ENCODE measurements at regions of chr2 and their contacts with region 1.

Region 1: GRCh38 chr2:159712143-159712928 is at the start of gene MARCHF7:
- DNase-seq: peak; percentile 98
- ATAC-seq: peak; percentile 91
- H3K4me3 ChIP-seq: peak within 1 kb of the TSS; percentile 59 to 100 (median 80)
- H3K4me3 Mint-ChIP-seq: peak within 1 kb of the TSS; percentile 99
- H3K27ac ChIP-seq: peak within 1 kb of the TSS; percentile 96 to 99
- H3K27ac Mint-ChIP-seq: peak within 1 kb of the TSS; percentile 99
- H3K4me1 ChIP-seq: peaks cover 29 to 34% of the 10 kb centered on the region in 2 donors
- H3K4me1 Mint-ChIP-seq: peaks cover 52% of the 10 kb centered on the region
- H3K27me3 ChIP-seq: no peaks in the 10 kb centered on the region
- H3K27me3 Mint-ChIP-seq: no peaks in the 10 kb centered on the region
- CTCF ChIP-seq: peak; percentile 63
- total RNA-seq, gene MARCHF7: 109 and 116 TPM in 2 replicates

Region 2: GRCh38 chr2:159286709-159287441 is 425.5 kb before region 1 on chr2:
- CTCF ChIA-PET with region 1: interaction called, 3 read pairs
- POLR2A ChIA-PET with region 1: interaction called, 5 read pairs
- intact Hi-C with region 1: loop called (anchors 1 kb)
- DNase-seq: peak; percentile 98
- ATAC-seq: peak; percentile 99
- H3K4me3 ChIP-seq: peak overlapping the region; percentile 65 to 93 (median 85)
- H3K4me3 Mint-ChIP-seq: peak overlapping the region; percentile 95
- H3K27ac ChIP-seq: peak overlapping the region; percentile 78 to 87
- H3K27ac Mint-ChIP-seq: peak overlapping the region; percentile 90
- H3K4me1 ChIP-seq: peaks cover 20 to 26% of the 10 kb centered on the region in 2 donors
- H3K4me1 Mint-ChIP-seq: peaks cover 32% of the 10 kb centered on the region
- H3K27me3 ChIP-seq: no peaks in the 10 kb centered on the region
- H3K27me3 Mint-ChIP-seq: peaks cover 4% of the 10 kb centered on the region
- CTCF ChIP-seq: no peak

Region 3: DNA sequence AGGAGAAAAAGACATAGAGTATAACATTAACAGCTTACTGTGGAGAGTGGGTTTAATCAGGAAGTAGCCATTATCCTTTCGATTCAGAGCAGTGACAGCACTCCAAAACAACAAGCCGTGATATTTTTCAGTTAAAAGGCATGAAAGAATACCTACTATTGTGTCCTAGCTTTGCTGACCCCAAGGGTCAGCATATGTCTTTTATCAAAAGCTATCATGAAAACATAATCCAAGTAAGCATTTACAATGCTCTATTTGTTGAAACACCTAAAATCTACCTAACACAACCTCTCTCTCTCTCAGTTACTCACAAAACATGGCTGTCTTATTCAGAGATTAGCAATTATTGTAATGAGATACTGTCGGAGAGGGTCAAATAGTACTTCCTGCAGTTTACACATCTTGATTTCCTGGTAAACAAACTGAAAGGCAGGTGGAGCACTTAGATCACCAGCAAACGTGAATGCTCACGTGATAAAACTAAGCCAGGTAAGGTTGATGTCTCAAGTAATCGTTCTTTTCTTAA is 196.0 kb before region 1 on chr2:
- CTCF ChIA-PET with region 1: interaction called, 6 read pairs
- POLR2A ChIA-PET with region 1: no interaction called
- intact Hi-C with region 1: loop called (anchors 1 kb)
- DNase-seq: peak; percentile 80
- ATAC-seq: peak; percentile 86
- H3K4me3 ChIP-seq: peak overlapping the region; percentile 35 to 91 (median 67)
- H3K4me3 Mint-ChIP-seq: peak overlapping the region; percentile 78
- H3K27ac ChIP-seq: peak overlapping the region; percentile 49 to 79
- H3K27ac Mint-ChIP-seq: peak overlapping the region; percentile 92
- H3K4me1 ChIP-seq: peaks cover 8 to 27% of the 10 kb centered on the region in 2 donors
- H3K4me1 Mint-ChIP-seq: peaks cover 23% of the 10 kb centered on the region
- H3K27me3 ChIP-seq: no peaks in the 10 kb centered on the region
- H3K27me3 Mint-ChIP-seq: no peaks in the 10 kb centered on the region
- CTCF ChIP-seq: no peak

Region 4: GRCh38 chr2:159615140-159615951 is 97.0 kb before region 1 on chr2:
- CTCF ChIA-PET with region 1: interaction called, 4 read pairs
- POLR2A ChIA-PET with region 1: no interaction called
- intact Hi-C with region 1: loop called (anchors 1 kb)
- DNase-seq: peak; percentile 71
- ATAC-seq: peak; percentile 70
- H3K4me3 ChIP-seq: peak overlapping the region; percentile 72 to 82 (median 81)
- H3K4me3 Mint-ChIP-seq: peak overlapping the region; percentile 87
- H3K27ac ChIP-seq: peak overlapping the region in 1 of 2 donors; percentile 59
- H3K27ac Mint-ChIP-seq: peak overlapping the region; percentile 79
- H3K4me1 ChIP-seq: peaks cover 15 to 16% of the 10 kb centered on the region in 2 donors
- H3K4me1 Mint-ChIP-seq: peaks cover 20% of the 10 kb centered on the region
- H3K27me3 ChIP-seq: peaks cover 0 to 4% (median 0%) of the 10 kb centered on the region in 4 experiments
- H3K27me3 Mint-ChIP-seq: peaks cover 26% of the 10 kb centered on the region
- CTCF ChIP-seq: no peak

Region 5: DNA sequence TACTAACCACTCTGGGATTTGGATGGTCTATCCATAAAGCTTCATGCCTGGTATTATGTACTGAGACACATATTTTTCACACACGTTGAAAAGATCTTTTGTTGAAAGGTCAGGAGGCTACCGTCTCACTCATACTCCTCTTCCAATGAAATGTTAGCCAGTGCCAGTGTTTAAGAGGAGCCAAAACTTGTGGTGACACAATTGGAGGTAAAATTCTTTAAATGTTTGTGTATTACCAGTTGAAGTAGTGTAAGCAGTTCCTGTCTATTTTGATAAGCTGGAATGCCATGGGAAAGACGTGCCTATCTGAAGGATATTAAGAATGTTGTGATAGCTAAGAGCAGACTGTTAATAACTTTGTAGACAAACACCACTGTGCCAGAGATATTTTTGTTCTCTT is 32.0 kb after region 1 on chr2:
- CTCF ChIA-PET with region 1: no interaction called
- POLR2A ChIA-PET with region 1: no interaction called
- intact Hi-C with region 1: no loop called
- DNase-seq: no peak
- ATAC-seq: no peak
- H3K4me3 ChIP-seq: no peak overlapping the region
- H3K4me3 Mint-ChIP-seq: no peak overlapping the region
- H3K27ac ChIP-seq: no peak overlapping the region
- H3K27ac Mint-ChIP-seq: no peak overlapping the region
- H3K4me1 ChIP-seq: no peaks in the 10 kb centered on the region
- H3K4me1 Mint-ChIP-seq: peaks cover 2% of the 10 kb centered on the region
- H3K27me3 ChIP-seq: no peaks in the 10 kb centered on the region
- H3K27me3 Mint-ChIP-seq: no peaks in the 10 kb centered on the region
- CTCF ChIP-seq: no peak

Region 6: GRCh38 chr2:159760326-159760725 is 48.0 kb after region 1 on chr2:
- CTCF ChIA-PET with region 1: no interaction called
- POLR2A ChIA-PET with region 1: interaction called, 3 read pairs
- intact Hi-C with region 1: loop called (anchors 10 kb)
- DNase-seq: no peak
- ATAC-seq: no peak
- H3K4me3 ChIP-seq: no peak overlapping the region
- H3K4me3 Mint-ChIP-seq: no peak overlapping the region
- H3K27ac ChIP-seq: no peak overlapping the region
- H3K27ac Mint-ChIP-seq: no peak overlapping the region
- H3K4me1 ChIP-seq: no peaks in the 10 kb centered on the region
- H3K4me1 Mint-ChIP-seq: no peaks in the 10 kb centered on the region
- H3K27me3 ChIP-seq: no peaks in the 10 kb centered on the region
- H3K27me3 Mint-ChIP-seq: no peaks in the 10 kb centered on the region
- CTCF ChIP-seq: no peak

Region 7: DNA sequence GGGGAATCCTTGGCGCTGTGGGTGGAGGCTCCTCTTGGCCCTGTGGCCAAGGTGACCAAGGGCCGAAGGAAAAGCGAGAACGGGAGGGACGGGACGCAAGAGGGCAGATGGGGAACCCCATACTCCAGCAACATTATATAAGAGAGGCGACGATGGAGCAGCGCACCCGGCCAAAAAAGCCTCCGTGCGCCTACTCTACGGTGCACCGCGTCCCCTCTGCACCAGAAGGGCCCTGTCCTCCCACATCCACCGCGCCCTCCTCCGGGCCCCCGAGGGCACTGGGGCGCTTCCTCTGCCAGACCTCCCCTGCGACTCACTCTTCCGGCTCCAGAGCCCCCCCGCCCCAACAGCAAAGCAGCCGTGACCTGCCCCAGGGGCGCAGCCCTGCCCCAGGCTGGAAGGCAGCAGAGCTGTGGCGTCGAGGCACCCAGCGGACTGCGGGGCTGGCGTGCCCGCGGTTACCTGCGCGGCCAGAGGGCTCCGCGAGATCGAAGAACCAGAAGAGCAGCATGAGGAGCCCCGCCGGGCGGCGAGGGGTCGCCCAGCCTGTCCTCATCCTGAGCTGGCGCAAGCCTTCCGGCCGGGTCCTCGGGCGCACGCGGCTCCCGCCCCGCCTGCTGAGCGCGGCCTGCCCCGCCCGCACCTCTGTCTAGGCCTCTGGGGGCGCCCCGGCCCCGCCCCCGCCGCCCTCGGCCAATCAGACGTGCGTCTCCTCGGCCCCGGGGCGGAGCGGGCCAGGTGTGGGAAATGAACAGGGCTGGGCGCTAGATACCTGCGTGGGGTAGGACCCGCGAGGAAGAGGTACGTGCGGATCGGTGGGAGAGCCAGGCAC is 192.0 kb after region 1 on chr2:
- CTCF ChIA-PET with region 1: no interaction called
- POLR2A ChIA-PET with region 1: interaction called, 5 read pairs
- intact Hi-C with region 1: loop called (anchors 1 kb)
- DNase-seq: peak; percentile 90
- ATAC-seq: peak; percentile 85
- H3K4me3 ChIP-seq: peak within 1 kb of the TSS; percentile 69 to 96 (median 79)
- H3K4me3 Mint-ChIP-seq: peak within 1 kb of the TSS; percentile 100
- H3K27ac ChIP-seq: peak within 1 kb of the TSS; percentile 85 to 87
- H3K27ac Mint-ChIP-seq: peak within 1 kb of the TSS; percentile 99
- H3K4me1 ChIP-seq: peaks cover 7 to 26% of the 10 kb centered on the region in 2 donors
- H3K4me1 Mint-ChIP-seq: peaks cover 41% of the 10 kb centered on the region
- H3K27me3 ChIP-seq: no peaks in the 10 kb centered on the region
- H3K27me3 Mint-ChIP-seq: no peaks in the 10 kb centered on the region
- CTCF ChIP-seq: no peak

Region 8: GRCh38 chr2:161136696-161137324 is 1424.5 kb after region 1 on chr2:
- CTCF ChIA-PET with region 1: no interaction called
- POLR2A ChIA-PET with region 1: no interaction called
- intact Hi-C with region 1: loop called (anchors 5 kb)
- DNase-seq: peak; percentile 93
- ATAC-seq: peak; percentile 94
- H3K4me3 ChIP-seq: peak overlapping the region; percentile 62 to 94 (median 79)
- H3K4me3 Mint-ChIP-seq: peak overlapping the region; percentile 99
- H3K27ac ChIP-seq: peak overlapping the region; percentile 97 to 100
- H3K27ac Mint-ChIP-seq: peak overlapping the region; percentile 97
- H3K4me1 ChIP-seq: peaks cover 23 to 35% of the 10 kb centered on the region in 2 donors
- H3K4me1 Mint-ChIP-seq: peaks cover 53% of the 10 kb centered on the region
- H3K27me3 ChIP-seq: no peaks in the 10 kb centered on the region
- H3K27me3 Mint-ChIP-seq: no peaks in the 10 kb centered on the region
- CTCF ChIP-seq: no peak